Activated CD4-positive, alpha-beta T cell treated with anti-CD3 and anti-CD28 coated beads for 36 hours (primary cell): ENCODE measurements at regions of chr3 and their contacts with region 1.

Region 1: GRCh38 chr3:16264708-16265454 is at the starts of genes DPH3 and OXNAD1:
- DNase-seq: peak; percentile 100
- ATAC-seq: peak; percentile 98
- H3K4me3 Mint-ChIP-seq: peak within 1 kb of the TSS; percentile 82
- H3K27ac Mint-ChIP-seq: peak within 1 kb of the TSS; percentile 98
- H3K4me1 Mint-ChIP-seq: peaks cover 35% of the 10 kb centered on the region
- H3K27me3 Mint-ChIP-seq: no peaks in the 10 kb centered on the region
- total RNA-seq, gene DPH3: 13.0 to 17.8 TPM
- total RNA-seq, gene OXNAD1: 27.7 to 34.6 TPM

Region 2: GRCh38 chr3:15601397-15602145 is 663.3 kb before region 1 on chr3 and contains the starts of genes BTD and HACL1:
- CTCF ChIA-PET with region 1: interaction called, 3 read pairs
- POLR2A ChIA-PET with region 1: no interaction called
- intact Hi-C with region 1: loop called in 1 of 2 experiments (anchors 1 kb)
- DNase-seq: peak; percentile 99
- ATAC-seq: peak; percentile 94
- H3K4me3 Mint-ChIP-seq: peak within 1 kb of the TSS; percentile 100
- H3K27ac Mint-ChIP-seq: peak within 1 kb of the TSS; percentile 98
- H3K4me1 Mint-ChIP-seq: peaks cover 41% of the 10 kb centered on the region
- H3K27me3 Mint-ChIP-seq: no peaks in the 10 kb centered on the region
- total RNA-seq, gene BTD: 3.8 to 4.4 TPM
- total RNA-seq, gene HACL1: 22.3 to 23.2 TPM

Region 3: DNA sequence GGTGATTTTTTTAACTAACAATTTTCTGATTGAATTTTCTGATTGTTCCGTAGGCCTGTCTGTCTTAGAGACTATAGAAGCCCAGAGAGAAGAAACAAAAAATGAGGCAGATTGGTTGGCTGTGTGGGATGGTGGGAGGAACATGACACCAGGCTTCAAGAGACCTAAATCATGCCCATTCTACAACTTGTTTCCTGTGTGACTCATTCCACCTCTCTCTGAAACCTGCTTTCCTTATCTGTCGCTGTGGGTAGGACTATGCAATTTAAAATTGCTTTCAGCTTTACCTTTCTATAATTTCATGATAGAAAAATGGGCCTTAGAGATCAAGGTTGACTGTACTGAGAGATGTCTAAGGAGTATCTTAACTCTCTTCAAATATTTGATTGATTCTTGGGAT is 44.7 kb after region 1 on chr3:
- CTCF ChIA-PET with region 1: interaction called, 8 read pairs
- POLR2A ChIA-PET with region 1: interaction called, 4 read pairs
- intact Hi-C with region 1: loop called (anchors 2 kb)
- DNase-seq: peak; percentile 69
- ATAC-seq: peak; percentile 78
- H3K4me3 Mint-ChIP-seq: peak overlapping the region; percentile 25
- H3K27ac Mint-ChIP-seq: peak overlapping the region; percentile 87
- H3K4me1 Mint-ChIP-seq: peaks cover 93% of the 10 kb centered on the region
- H3K27me3 Mint-ChIP-seq: no peaks in the 10 kb centered on the region

Region 4: DNA sequence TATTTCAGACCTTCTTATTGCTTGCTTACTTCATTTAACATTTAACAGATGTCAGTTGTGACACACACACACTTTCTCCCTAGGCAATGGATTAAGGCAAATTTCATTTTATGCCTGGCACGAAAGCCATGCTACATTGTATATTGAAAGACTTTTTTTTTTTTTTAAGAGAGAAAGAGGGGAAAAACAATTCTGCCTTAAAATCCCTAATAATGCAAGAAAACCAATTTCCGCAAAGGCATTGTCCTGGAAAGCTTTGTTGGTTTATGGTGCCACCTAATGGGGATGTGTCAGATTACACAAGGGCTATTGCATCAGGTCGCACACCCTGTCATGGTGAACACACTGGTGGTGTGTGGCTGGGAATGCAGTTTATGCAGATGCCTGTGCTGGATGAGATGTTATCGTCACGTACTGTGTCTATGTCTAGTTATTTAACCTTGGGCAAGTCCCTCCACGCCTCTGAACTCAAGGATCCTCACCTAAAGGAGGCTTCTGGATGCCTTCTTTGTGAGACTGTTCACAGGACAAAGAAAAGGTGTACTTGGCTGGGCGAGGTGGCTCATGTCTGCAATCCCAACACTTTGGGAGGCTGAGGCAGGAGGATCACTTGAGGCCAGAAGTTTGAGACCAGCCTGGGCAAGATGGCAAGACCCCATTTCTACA is 285.9 kb after region 1 on chr3:
- CTCF ChIA-PET with region 1: interaction called, 20 read pairs
- POLR2A ChIA-PET with region 1: no interaction called
- intact Hi-C with region 1: loop called (anchors 1 kb)
- DNase-seq: peak; percentile 87
- ATAC-seq: peak; percentile 99
- H3K4me3 Mint-ChIP-seq: no peak overlapping the region
- H3K27ac Mint-ChIP-seq: peak overlapping the region; percentile 93
- H3K4me1 Mint-ChIP-seq: peaks cover 14% of the 10 kb centered on the region
- H3K27me3 Mint-ChIP-seq: no peaks in the 10 kb centered on the region

Region 5: GRCh38 chr3:16884084-16884747 is 619.3 kb after region 1 on chr3:
- CTCF ChIA-PET with region 1: interaction called, 3 read pairs
- POLR2A ChIA-PET with region 1: no interaction called
- intact Hi-C with region 1: loop called in 1 of 2 experiments (anchors 10 kb)
- DNase-seq: peak; percentile 87
- ATAC-seq: peak; percentile 61
- H3K4me3 Mint-ChIP-seq: peak overlapping the region; percentile 93
- H3K27ac Mint-ChIP-seq: peak overlapping the region; percentile 94
- H3K4me1 Mint-ChIP-seq: peaks cover 20% of the 10 kb centered on the region
- H3K27me3 Mint-ChIP-seq: no peaks in the 10 kb centered on the region